Panc1 (cell line): ENCODE measurements at regions of chr12 and their contacts with region 1.

Region 1: GRCh38 chr12:75862692-75863471 is 168.7 kb downstream of the PHLDA1 start:
- DNase-seq: peak; percentile 91
- ATAC-seq: peak; percentile 92
- H3K4me3 ChIP-seq: no peak overlapping the region
- H3K27ac ChIP-seq: peak overlapping the region; percentile 97
- H3K4me1 ChIP-seq: peaks cover 27% of the 10 kb centered on the region
- H3K27me3 ChIP-seq: no peaks in the 10 kb centered on the region
- CTCF ChIP-seq: no peak

Region 2: GRCh38 chr12:75526655-75527511 is 336.0 kb before region 1 on chr12:
- CTCF ChIA-PET with region 1: no interaction called
- POLR2A ChIA-PET with region 1: no interaction called
- in situ Hi-C with region 1: no loop called
- intact Hi-C with region 1: no loop called
- DNase-seq: no peak
- ATAC-seq: peak; percentile 92
- H3K4me3 ChIP-seq: no peak overlapping the region
- H3K27ac ChIP-seq: peak overlapping the region; percentile 78
- H3K4me1 ChIP-seq: peaks cover 13% of the 10 kb centered on the region
- H3K27me3 ChIP-seq: no peaks in the 10 kb centered on the region
- CTCF ChIP-seq: peak; percentile 71

Region 3: GRCh38 chr12:75951399-75952278 is 88.8 kb after region 1 on chr12:
- CTCF ChIA-PET with region 1: no interaction called
- POLR2A ChIA-PET with region 1: interaction called, 10 read pairs
- in situ Hi-C with region 1: no loop called
- intact Hi-C with region 1: no loop called
- DNase-seq: no peak
- ATAC-seq: no peak
- H3K4me3 ChIP-seq: no peak overlapping the region
- H3K27ac ChIP-seq: peak overlapping the region; percentile 99
- H3K4me1 ChIP-seq: peaks cover 54% of the 10 kb centered on the region
- H3K27me3 ChIP-seq: no peaks in the 10 kb centered on the region
- CTCF ChIP-seq: no peak